ENCODE measurements at regions of chr17 and their contacts with region 1.

Region 1: GRCh38 chr17:78421484-78422266 is 43.2 kb downstream of the PGS1 start:
- H3K4me3 Mint-ChIP-seq: no peak overlapping the region
- H3K27ac Mint-ChIP-seq: peak overlapping the region; percentile 52
- H3K4me1 Mint-ChIP-seq: peaks cover 50% of the 10 kb centered on the region
- H3K27me3 Mint-ChIP-seq: no peaks in the 10 kb centered on the region

Region 2: DNA sequence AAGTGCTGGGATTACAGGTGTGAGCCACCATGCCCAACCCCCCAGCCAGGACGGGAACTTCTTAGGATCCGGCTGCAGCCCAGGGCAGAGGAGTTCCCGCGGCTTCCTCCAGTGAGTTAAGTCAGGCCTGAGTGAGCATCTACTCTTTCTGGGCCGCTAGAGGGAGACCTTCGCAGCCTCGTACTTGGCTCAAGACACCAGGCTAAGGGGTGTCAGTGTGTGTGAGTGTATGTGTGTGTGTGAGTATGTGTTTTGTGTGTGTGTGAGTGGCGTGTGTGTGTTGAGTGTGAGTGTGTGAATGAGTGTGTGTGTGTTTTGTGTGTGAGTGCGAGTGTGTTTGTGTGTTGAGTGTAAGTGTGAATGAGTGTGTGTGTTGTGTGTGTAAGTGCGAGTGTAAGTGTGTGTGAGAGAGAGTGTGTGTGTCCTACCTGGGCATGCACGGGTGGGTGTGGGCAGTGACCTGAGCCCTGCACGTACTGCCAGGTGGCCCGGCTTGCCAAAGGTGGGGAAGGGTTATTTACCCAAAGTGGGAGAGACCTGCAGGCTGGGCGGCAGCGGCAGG is 131.8 kb before region 1 on chr17:
- intact Hi-C with region 1: loop called (anchors 2 kb)
- H3K4me3 Mint-ChIP-seq: no peak overlapping the region
- H3K27ac Mint-ChIP-seq: no peak overlapping the region
- H3K4me1 Mint-ChIP-seq: peaks cover 39% of the 10 kb centered on the region
- H3K27me3 Mint-ChIP-seq: peaks cover 2% of the 10 kb centered on the region

Region 3: GRCh38 chr17:78360371-78361224 is 61.1 kb before region 1 on chr17:
- intact Hi-C with region 1: loop called (anchors 1 kb)
- H3K4me3 Mint-ChIP-seq: peak overlapping the region; percentile 66
- H3K27ac Mint-ChIP-seq: peak overlapping the region; percentile 71
- H3K4me1 Mint-ChIP-seq: peaks cover 55% of the 10 kb centered on the region
- H3K27me3 Mint-ChIP-seq: peaks cover 26% of the 10 kb centered on the region

Region 4: GRCh38 chr17:78387977-78388941 is 33.4 kb before region 1 on chr17:
- intact Hi-C with region 1: loop called (anchors 2 kb)
- H3K4me3 Mint-ChIP-seq: peak overlapping the region; percentile 26
- H3K27ac Mint-ChIP-seq: peak overlapping the region; percentile 88
- H3K4me1 Mint-ChIP-seq: peaks cover 80% of the 10 kb centered on the region
- H3K27me3 Mint-ChIP-seq: no peaks in the 10 kb centered on the region

Region 5: DNA sequence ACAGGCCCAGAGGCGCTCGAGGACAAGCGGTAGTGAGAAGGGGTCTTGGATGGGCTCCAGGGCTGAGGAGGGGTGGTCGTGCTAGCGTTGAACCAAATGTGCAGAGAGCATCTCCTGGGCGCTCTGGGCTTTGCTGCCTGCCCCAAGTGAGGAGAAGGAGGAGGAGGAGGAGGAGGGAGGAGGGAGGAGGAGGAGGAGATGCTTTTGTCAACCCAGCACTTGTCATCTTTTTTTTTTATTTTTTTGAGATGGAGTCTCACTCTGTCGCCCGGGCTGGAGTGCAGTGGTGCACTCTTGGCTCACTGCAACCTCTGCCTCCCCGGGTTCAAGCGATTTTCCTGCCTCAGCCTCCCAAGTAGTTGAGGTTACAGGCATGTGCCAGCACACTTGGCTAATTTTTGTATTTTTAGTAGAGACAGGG is 16.6 kb after region 1 on chr17:
- intact Hi-C with region 1: no loop called
- H3K4me3 Mint-ChIP-seq: no peak overlapping the region
- H3K27ac Mint-ChIP-seq: no peak overlapping the region
- H3K4me1 Mint-ChIP-seq: peaks cover 23% of the 10 kb centered on the region
- H3K27me3 Mint-ChIP-seq: peaks cover 18% of the 10 kb centered on the region

Region 6: GRCh38 chr17:78517421-78517820 is 95.7 kb after region 1 on chr17:
- intact Hi-C with region 1: no loop called
- H3K4me3 Mint-ChIP-seq: no peak overlapping the region
- H3K27ac Mint-ChIP-seq: no peak overlapping the region
- H3K4me1 Mint-ChIP-seq: peaks cover 5% of the 10 kb centered on the region
- H3K27me3 Mint-ChIP-seq: peaks cover 4% of the 10 kb centered on the region

Region 7: DNA sequence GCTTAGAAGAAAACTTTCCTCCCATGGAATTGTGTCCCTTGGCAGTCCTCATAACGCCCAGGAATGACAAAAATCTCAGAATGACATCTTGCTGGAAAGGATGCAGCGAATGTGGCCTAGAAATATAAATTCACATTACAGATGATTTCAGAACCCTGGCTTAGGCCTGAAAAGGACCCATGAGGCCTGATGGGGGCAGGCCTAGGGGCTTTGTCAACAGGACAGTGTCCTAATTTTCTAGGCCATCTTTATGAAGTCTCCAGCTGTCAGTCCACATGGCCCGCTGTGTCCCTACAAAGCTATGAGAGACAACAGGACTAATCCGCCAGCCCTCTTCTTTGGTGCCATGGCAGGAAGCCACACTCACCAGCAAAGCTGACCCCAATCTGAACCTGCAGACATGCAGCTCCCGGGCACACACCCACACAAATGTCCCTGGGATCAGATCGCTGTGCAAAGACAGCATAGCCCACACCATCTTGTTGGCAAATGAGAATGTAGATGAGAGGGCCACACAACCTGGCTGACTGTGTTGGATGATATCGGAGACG is 195.9 kb after region 1 on chr17:
- intact Hi-C with region 1: no loop called
- H3K4me3 Mint-ChIP-seq: no peak overlapping the region
- H3K27ac Mint-ChIP-seq: no peak overlapping the region
- H3K4me1 Mint-ChIP-seq: peaks cover 24% of the 10 kb centered on the region
- H3K27me3 Mint-ChIP-seq: peaks cover 16% of the 10 kb centered on the region

Measured in dendritic cell treated with granulocyte-macrophage colony-stimulating factor and Interleukin-4, amounts not matched to agents 40 ng/mL and 50 ng/mL, for 4 days (primary cell).